IMR-90 (cell line): ENCODE measurements at regions of chr2 and their contacts with region 1.

Region 1: DNA sequence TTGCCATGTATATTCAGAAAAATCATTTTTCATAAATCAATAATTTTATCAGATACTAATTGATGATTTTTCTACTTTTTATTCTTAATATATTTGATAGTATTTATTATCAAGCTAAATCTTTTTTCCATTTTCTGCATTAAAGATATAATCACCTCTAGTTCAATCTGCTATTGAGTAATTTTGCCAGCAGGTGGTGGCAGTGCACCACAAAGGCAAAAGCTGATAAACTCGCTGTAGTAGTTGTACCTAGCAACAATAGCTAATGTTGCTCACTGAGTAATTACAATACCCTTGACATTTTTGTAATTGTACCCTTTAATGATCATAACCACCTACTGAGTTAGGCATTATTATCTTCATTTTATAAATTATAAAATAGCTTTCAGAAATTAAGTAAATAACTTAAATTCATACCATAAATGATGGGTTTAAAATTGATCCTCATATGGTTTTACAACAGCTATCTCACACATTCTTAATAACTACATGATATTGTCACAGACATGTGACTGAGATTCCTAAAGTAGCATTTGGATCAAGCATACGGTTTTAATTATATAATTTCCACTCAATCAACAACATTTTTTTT is 52.0 kb upstream of the CALCRL start:
- DNase-seq: peak; percentile 66
- ATAC-seq: peak; percentile 71
- H3K4me3 ChIP-seq: no peak overlapping the region
- H3K27ac ChIP-seq: no peak overlapping the region
- H3K4me1 ChIP-seq: peaks cover 9% of the 10 kb centered on the region
- H3K27me3 ChIP-seq: no peaks in the 10 kb centered on the region
- CTCF ChIP-seq: peak; percentile 94
- POLR2A ChIP-seq: 0 out of 2 replicates have a peak, but pooled peaks have one; percentile 30
- RAD21 ChIP-seq: peak; percentile 96

Region 2: DNA sequence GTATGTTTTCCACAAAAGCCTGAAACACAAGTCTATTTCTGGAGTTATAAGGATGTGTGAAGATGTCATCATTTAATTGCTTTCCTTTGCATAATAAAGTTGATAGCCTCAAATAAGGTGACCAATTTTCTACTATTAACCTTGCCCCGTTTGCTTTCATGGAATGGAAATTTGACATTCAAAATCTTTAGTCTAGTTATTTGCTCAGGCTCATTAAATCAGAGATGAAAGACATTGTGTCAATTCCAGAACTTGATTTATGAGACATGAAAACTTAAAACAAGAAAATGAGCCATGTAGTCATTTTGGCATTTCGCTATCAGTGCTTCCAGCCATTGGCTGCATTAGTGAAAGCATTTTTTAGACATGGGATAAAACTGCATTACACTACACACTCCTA is 559.6 kb before region 1 on chr2:
- CTCF ChIA-PET with region 1: no interaction called
- POLR2A ChIA-PET with region 1: no interaction called
- dilution Hi-C with region 1: no loop called
- in situ Hi-C with region 1: no loop called
- intact Hi-C with region 1: no loop called
- DNase-seq: no peak
- ATAC-seq: no peak
- H3K4me3 ChIP-seq: no peak overlapping the region
- H3K27ac ChIP-seq: no peak overlapping the region
- H3K4me1 ChIP-seq: no peaks in the 10 kb centered on the region
- H3K27me3 ChIP-seq: no peaks in the 10 kb centered on the region
- CTCF ChIP-seq: no peak
- POLR2A ChIP-seq: no peak
- RAD21 ChIP-seq: no peak

Region 3: GRCh38 chr2:187329586-187329985 is 170.5 kb before region 1 on chr2:
- CTCF ChIA-PET with region 1: no interaction called
- POLR2A ChIA-PET with region 1: no interaction called
- dilution Hi-C with region 1: no loop called
- in situ Hi-C with region 1: no loop called
- intact Hi-C with region 1: no loop called
- DNase-seq: no peak
- ATAC-seq: no peak
- H3K4me3 ChIP-seq: no peak overlapping the region
- H3K27ac ChIP-seq: no peak overlapping the region
- H3K4me1 ChIP-seq: no peaks in the 10 kb centered on the region
- H3K27me3 ChIP-seq: no peaks in the 10 kb centered on the region
- CTCF ChIP-seq: no peak
- POLR2A ChIP-seq: no peak
- RAD21 ChIP-seq: no peak

Region 4: GRCh38 chr2:187552828-187553681 is 53.0 kb after region 1 on chr2:
- CTCF ChIA-PET with region 1: interaction called, 9 read pairs
- POLR2A ChIA-PET with region 1: interaction called, 6 read pairs
- dilution Hi-C with region 1: no loop called
- in situ Hi-C with region 1: no loop called
- intact Hi-C with region 1: loop called (anchors 2 kb)
- DNase-seq: peak; percentile 91
- ATAC-seq: peak; percentile 78
- H3K4me3 ChIP-seq: peak overlapping the region; percentile 92
- H3K27ac ChIP-seq: peak overlapping the region; percentile 98
- H3K4me1 ChIP-seq: peaks cover 5% of the 10 kb centered on the region
- H3K27me3 ChIP-seq: no peaks in the 10 kb centered on the region
- CTCF ChIP-seq: no peak
- POLR2A ChIP-seq: no peak
- RAD21 ChIP-seq: no peak

Region 5: GRCh38 chr2:187574969-187575750 is 75.1 kb after region 1 on chr2:
- CTCF ChIA-PET with region 1: interaction called, 134 read pairs
- POLR2A ChIA-PET with region 1: no interaction called
- dilution Hi-C with region 1: no loop called
- in situ Hi-C with region 1: loop called (anchors 5 kb)
- intact Hi-C with region 1: loop called (anchors 1 kb)
- DNase-seq: peak; percentile 83
- ATAC-seq: peak; percentile 89
- H3K4me3 ChIP-seq: no peak overlapping the region
- H3K27ac ChIP-seq: peak overlapping the region; percentile 70
- H3K4me1 ChIP-seq: peaks cover 8% of the 10 kb centered on the region
- H3K27me3 ChIP-seq: no peaks in the 10 kb centered on the region
- CTCF ChIP-seq: no peak
- POLR2A ChIP-seq: no peak
- RAD21 ChIP-seq: no peak

Region 6: GRCh38 chr2:187581125-187581896 is 81.3 kb after region 1 on chr2:
- CTCF ChIA-PET with region 1: interaction called, 134 read pairs
- POLR2A ChIA-PET with region 1: no interaction called
- dilution Hi-C with region 1: no loop called
- in situ Hi-C with region 1: loop called (anchors 5 kb)
- intact Hi-C with region 1: loop called (anchors 1 kb)
- DNase-seq: peak; percentile 52
- ATAC-seq: peak; percentile 31; the same call in 1 of the 2 replicates
- H3K4me3 ChIP-seq: peak overlapping the region; percentile 39
- H3K27ac ChIP-seq: no peak overlapping the region
- H3K4me1 ChIP-seq: peaks cover 5% of the 10 kb centered on the region
- H3K27me3 ChIP-seq: no peaks in the 10 kb centered on the region
- CTCF ChIP-seq: peak; percentile 67
- POLR2A ChIP-seq: no peak
- RAD21 ChIP-seq: peak; percentile 52

Region 7: GRCh38 chr2:188512456-188512855 is 1012.4 kb after region 1 on chr2:
- CTCF ChIA-PET with region 1: no interaction called
- POLR2A ChIA-PET with region 1: no interaction called
- dilution Hi-C with region 1: no loop called
- in situ Hi-C with region 1: no loop called
- intact Hi-C with region 1: loop called (anchors 2 kb)
- DNase-seq: peak; percentile 77
- ATAC-seq: peak; percentile 84
- H3K4me3 ChIP-seq: no peak overlapping the region
- H3K27ac ChIP-seq: no peak overlapping the region
- H3K4me1 ChIP-seq: no peaks in the 10 kb centered on the region
- H3K27me3 ChIP-seq: no peaks in the 10 kb centered on the region
- CTCF ChIP-seq: peak; percentile 80
- POLR2A ChIP-seq: peak; percentile 24; the same call in 1 of the 2 replicates
- RAD21 ChIP-seq: peak; percentile 94